HepG2 (cell line): ENCODE measurements at regions of chr17 and their contacts with region 1.

Region 1: DNA sequence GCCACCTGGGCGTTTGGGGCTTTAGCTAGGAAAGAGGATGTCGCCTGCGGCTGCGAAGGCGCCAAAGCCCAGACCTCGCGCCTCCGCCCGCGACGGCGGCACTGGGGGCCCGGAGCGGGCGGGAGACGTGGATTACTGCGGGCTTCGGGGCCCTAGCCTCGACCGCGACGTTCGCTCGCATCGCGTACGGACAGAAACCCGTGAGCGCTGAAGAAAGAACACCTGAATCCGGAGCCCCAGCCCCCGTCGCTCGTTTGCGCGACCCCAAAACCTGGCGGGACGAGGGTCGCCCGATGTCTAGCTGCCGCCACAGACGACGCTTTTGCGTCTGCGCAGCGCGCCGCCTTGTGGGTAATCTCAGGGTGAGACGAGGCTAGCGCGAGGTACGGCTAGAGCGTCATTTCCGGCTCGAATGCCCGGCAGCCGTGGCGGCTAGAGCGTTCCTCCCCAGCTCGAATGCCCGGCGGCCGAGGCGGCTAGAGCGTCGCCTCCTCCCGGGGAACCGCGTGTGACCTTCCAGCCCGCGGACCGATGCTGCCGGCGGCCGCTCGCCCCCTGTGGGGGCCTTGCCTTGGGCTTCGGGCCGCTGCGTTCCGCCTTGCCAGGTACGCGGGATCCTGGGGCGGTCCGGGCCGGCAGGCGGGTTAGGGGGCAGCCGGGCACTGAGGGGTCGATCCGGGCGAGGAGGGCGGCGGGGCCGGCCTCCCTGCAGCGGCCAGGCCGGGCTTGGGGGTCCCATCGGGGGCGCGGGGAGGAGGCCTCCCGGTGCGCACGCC is at the start of gene MRPL12:
- DNase-seq: peak; percentile 91
- ATAC-seq: peak; percentile 82
- H3K4me3 ChIP-seq: peak within 1 kb of the TSS; percentile 92 to 93 (median 92)
- H3K27ac ChIP-seq: peak within 1 kb of the TSS; percentile 93
- H3K4me1 ChIP-seq: peaks cover 33% of the 10 kb centered on the region
- H3K27me3 ChIP-seq: no peaks in the 10 kb centered on the region; a peak in 1 of 5 replicates
- CTCF ChIP-seq: peak; percentile 69
- EP300 ChIP-seq: 0 out of 4 replicates have a peak, but pooled peaks of 1 of the 2 experiments have one; percentile 37
- POLR2A ChIP-seq: peak in 1 of 2 experiments; percentile 96; a peak in 2 of 4 replicates
- RAD21 ChIP-seq: peak; percentile 47
- total RNA-seq, gene MRPL12: 39.1 and 72.5 TPM in 2 replicates

Region 2: DNA sequence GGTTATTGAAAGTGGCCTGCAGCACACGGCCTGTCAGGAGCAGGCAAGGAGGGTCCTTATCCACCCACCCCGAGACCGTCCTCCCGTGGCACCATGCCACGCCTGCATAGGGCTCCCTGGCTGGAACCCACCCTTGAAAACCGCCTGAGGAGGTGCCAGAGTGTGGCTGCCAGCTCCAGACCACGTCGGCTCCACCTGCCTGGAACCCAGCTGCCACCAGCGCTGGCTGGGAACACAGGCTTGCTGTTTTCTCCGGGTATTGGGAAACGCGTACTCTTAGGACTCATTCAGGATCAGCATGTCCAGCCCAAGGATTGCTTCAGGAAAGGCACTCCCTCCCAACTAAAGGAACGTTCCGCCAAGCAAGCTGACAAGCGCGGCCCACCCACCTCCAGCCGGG is 26.3 kb before region 1 on chr17:
- CTCF ChIA-PET with region 1: no interaction called
- POLR2A ChIA-PET with region 1: interaction called, 124 read pairs
- in situ Hi-C with region 1: no loop called
- intact Hi-C with region 1: no loop called
- DNase-seq: no peak
- ATAC-seq: peak; percentile 17
- H3K4me3 ChIP-seq: no peak overlapping the region
- H3K27ac ChIP-seq: no peak overlapping the region
- H3K4me1 ChIP-seq: peaks cover 24% of the 10 kb centered on the region
- H3K27me3 ChIP-seq: no peaks in the 10 kb centered on the region
- CTCF ChIP-seq: no peak
- EP300 ChIP-seq: no peak
- POLR2A ChIP-seq: 0 out of 4 replicates have a peak, but pooled peaks of 1 of the 2 experiments have one; percentile 26
- RAD21 ChIP-seq: no peak